ENCODE measurements at regions of chr3 and their contacts with region 1.

Region 1: DNA sequence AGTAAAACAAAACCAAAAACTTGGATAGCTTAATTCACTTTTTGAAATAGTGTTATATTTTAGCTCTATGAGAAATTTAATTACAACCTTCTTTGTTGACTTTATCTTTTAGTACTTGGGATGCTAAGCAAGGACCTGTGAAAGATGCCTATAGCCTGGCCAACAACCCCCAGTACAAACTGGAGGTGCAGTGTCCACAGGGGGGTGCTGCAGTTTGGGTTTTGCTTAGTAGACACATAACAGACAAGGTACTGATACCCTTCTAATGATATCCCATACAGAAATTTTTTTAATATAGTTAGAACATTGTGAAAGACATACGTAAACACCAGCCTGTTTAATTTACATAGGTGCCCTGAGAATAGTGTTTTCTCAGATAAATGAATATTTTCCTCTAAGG is 35.3 kb downstream of the CAPN7 start:
- DNase-seq: no peak
- H3K4me3 Mint-ChIP-seq: no peak overlapping the region
- H3K27ac Mint-ChIP-seq: no peak overlapping the region
- H3K4me1 Mint-ChIP-seq: peaks cover 7% of the 10 kb centered on the region
- H3K27me3 Mint-ChIP-seq: no peaks in the 10 kb centered on the region

Region 2: DNA sequence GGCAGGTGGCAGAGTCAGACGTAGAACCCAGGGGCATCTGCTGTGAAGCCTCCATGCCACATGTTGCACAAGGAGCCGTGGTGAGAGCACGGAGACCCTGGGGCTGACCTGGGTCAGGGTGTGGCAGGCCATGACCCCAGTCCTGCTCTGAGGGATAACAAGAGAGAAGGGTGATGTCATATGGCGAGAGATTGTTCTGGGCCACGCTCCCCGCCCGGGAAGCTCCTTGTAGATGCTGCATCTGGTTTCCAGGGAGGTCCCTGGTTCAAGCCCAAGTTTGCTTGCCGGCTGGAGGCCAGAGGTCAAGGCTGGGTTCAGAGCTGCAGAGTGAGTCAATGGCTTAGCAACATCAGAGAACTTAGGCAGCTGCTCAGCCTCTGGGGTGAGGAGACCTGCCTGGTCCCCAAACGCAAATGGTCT is 405.3 kb before region 1 on chr3:
- intact Hi-C with region 1: no loop called
- DNase-seq: no peak
- H3K4me3 Mint-ChIP-seq: no peak overlapping the region
- H3K27ac Mint-ChIP-seq: no peak overlapping the region
- H3K4me1 Mint-ChIP-seq: no peaks in the 10 kb centered on the region
- H3K27me3 Mint-ChIP-seq: peaks cover 4% of the 10 kb centered on the region

Region 3: DNA sequence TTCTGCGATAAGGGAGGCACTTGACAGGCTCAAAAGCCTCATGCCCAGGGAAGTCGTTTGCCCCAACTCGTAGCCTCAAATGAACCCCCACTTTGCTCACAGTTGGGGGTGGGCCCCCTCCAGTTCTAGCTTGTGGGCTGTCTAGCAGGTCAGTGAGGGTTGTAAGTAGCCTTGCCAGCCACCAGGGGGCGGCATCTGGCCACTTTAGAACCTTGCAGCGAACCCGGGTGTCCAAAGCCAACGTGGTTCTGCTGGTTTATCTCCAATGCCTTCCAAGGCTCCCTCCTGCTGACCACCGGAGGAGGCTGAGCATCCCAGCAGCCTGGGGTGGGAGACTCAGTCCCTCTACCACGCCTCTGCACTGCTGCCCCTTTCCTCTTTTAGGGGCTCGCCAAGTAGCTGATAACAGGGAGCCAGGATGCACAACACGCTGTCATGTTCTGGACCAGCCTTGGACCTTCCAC is 133.2 kb before region 1 on chr3:
- intact Hi-C with region 1: loop called (anchors 5 kb)
- DNase-seq: peak; percentile 55
- H3K4me3 Mint-ChIP-seq: no peak overlapping the region
- H3K27ac Mint-ChIP-seq: no peak overlapping the region
- H3K4me1 Mint-ChIP-seq: peaks cover 4% of the 10 kb centered on the region
- H3K27me3 Mint-ChIP-seq: peaks cover 11% of the 10 kb centered on the region

Region 4: GRCh38 chr3:15258720-15259119 is 17.4 kb after region 1 on chr3:
- intact Hi-C with region 1: loop called (anchors 2 kb)
- DNase-seq: no peak
- H3K4me3 Mint-ChIP-seq: no peak overlapping the region
- H3K27ac Mint-ChIP-seq: peak overlapping the region; percentile 45
- H3K4me1 Mint-ChIP-seq: peaks cover 20% of the 10 kb centered on the region
- H3K27me3 Mint-ChIP-seq: no peaks in the 10 kb centered on the region

Region 5: GRCh38 chr3:15405448-15406050 is 164.2 kb after region 1 on chr3:
- intact Hi-C with region 1: loop called (anchors 1 kb)
- DNase-seq: no peak
- H3K4me3 Mint-ChIP-seq: no peak overlapping the region
- H3K27ac Mint-ChIP-seq: no peak overlapping the region
- H3K4me1 Mint-ChIP-seq: peaks cover 6% of the 10 kb centered on the region
- H3K27me3 Mint-ChIP-seq: no peaks in the 10 kb centered on the region

Region 6: DNA sequence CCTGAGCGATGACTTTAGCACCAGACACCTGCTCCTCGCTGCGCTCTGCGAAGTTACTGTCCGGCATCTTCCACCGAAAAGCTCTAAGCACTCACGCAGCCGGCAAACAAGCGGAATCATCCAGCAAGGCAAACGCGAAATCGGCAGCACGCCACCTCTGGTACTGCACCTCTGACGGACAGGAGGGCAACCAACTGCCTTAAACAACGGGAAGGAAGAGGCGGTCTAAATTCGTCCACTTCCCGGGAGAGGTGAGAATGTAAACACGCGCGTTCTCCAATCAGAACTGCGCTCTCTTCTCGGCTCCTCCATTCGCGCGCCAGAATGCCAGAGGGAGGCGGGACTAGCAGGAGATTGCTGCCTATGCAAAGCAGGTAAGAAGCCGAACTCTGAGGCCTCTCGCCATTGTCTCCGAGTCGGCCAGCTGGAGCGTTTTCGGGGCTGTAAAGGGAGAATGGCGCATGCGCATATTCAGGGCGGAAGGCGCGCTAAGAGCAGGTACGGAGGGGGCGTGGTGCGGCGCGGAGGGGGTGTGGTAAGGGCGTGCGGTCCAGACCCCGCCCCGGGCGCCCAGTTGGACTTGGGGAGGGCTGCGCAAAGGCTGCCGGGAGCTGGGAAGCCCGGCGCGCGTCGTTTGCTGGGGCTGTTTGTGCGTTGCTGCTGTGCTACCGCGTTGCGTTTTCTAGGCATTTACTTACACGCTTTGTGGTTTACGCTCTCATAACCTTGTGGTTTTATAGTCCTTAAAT is 360.2 kb after region 1 on chr3 and contains the starts of genes BTD and HACL1:
- intact Hi-C with region 1: no loop called
- DNase-seq: peak; percentile 97
- H3K4me3 Mint-ChIP-seq: peak within 1 kb of the TSS; percentile 99
- H3K27ac Mint-ChIP-seq: peak within 1 kb of the TSS; percentile 99
- H3K4me1 Mint-ChIP-seq: peaks cover 51% of the 10 kb centered on the region
- H3K27me3 Mint-ChIP-seq: no peaks in the 10 kb centered on the region
- total RNA-seq, gene BTD: 2.6 and 3.5 TPM in 2 replicates
- total RNA-seq, gene HACL1: 21.4 and 24.8 TPM in 2 replicates

Measured in activated T-helper 1 cell treated with anti-CD3 and anti-CD28 coated beads, Interleukin-12 subunit alpha, Interleukin-12 subunit beta, Interleukin-2, Interleukin-4 antibody, amounts not matched to agents 30 ng/mL and 10 ng/mL and 1 ng/mL, durations not matched to agents 14 hours and 24 hours and 36 hours (primary cell).